ENCODE measurements at regions of chr17 and their contacts with region 1.

Region 1: DNA sequence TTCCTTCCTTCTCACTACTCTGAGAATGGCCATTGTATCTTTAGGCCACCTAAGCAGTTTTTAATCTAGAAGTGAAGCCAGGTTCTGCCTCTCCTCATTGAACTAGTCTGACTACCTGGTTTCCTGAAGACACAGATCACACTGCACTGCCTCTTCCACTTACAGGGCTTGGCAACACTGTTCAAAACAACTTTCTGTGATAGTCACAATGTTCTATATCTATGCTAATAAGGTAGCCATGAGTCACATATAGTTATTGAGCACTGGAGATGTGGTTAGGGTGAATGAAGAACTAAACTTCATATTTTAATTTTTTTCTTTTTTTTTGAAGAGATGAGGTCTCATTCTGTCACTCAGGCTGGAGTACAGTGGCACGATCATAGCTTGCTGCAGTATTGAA is 26.9 kb downstream of the RND2 start:
- DNase-seq: no peak
- H3K4me3 ChIP-seq: no peak overlapping the region
- H3K27ac ChIP-seq: no peak overlapping the region
- H3K4me1 ChIP-seq: no peaks in the 10 kb centered on the region
- H3K27me3 ChIP-seq: no peaks in the 10 kb centered on the region
- CTCF ChIP-seq: no peak

Region 2: GRCh38 chr17:42850954-42851353 is 201.0 kb before region 1 on chr17 and contains the start of gene AOC3:
- CTCF ChIA-PET with region 1: no interaction called
- dilution Hi-C with region 1: loop called (anchors 10 kb)
- in situ Hi-C with region 1: no loop called
- intact Hi-C with region 1: no loop called
- DNase-seq: no peak
- H3K4me3 ChIP-seq: no peak within 1 kb of the TSS
- H3K27ac ChIP-seq: no peak within 1 kb of the TSS
- H3K4me1 ChIP-seq: peaks cover 5% of the 10 kb centered on the region
- H3K27me3 ChIP-seq: no peaks in the 10 kb centered on the region
- CTCF ChIP-seq: no peak
- total RNA-seq, gene AOC3: 0.31 TPM in 1 of 2 donors, not detected in the other

Region 3: DNA sequence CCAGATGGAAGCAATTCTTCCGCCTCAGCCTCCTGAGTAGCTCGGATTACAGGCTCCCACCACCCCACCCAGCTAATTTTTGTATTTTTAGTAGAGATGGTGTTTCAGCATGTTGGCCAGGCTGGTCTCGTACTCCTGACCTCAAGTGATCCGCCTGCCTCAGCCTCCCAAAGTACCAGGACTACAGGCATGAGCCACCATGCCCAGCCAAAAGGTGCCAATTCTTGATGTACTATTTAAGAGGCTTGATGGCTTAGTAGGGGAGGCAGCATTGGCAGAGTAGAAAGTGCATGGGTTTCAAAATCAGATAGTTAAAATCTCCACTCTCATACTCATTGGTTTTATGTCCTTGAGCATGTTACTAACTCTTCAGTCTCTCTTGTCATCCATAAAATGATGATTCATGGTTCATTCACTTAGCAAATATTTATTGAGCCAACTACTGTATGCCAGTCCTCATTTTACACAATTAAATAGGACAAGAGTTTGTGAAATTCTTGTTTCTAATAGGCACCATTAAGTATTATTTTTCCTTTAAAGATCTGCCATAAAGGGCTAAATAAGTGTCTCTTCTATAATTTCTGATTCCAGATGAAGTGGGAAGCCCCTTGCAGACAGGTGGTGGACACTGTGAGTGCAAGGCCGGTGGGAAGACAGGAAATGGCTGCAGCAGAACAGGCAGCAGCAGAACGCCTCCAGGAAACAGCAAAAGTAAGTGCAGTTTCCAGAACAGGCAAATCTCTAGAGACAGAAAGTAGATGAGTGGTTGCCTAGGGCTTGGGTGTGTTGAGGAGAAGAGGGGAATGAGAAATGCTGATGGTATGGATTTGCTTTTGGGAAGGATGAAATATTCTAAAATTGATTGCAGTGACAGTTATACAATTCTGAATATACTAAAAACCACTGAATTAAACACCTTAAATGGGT is 62.0 kb before region 1 on chr17:
- CTCF ChIA-PET with region 1: no interaction called
- dilution Hi-C with region 1: no loop called
- in situ Hi-C with region 1: no loop called
- intact Hi-C with region 1: no loop called
- DNase-seq: peak; percentile 65
- H3K4me3 ChIP-seq: no peak overlapping the region
- H3K27ac ChIP-seq: peak overlapping the region; percentile 59
- H3K4me1 ChIP-seq: peaks cover 32% of the 10 kb centered on the region
- H3K27me3 ChIP-seq: no peaks in the 10 kb centered on the region
- CTCF ChIP-seq: no peak